Right ventricle myocardium inferior (tissue), 1 donor: ENCODE measurements at regions of chr4 and their contacts with region 1.

Region 1: DNA sequence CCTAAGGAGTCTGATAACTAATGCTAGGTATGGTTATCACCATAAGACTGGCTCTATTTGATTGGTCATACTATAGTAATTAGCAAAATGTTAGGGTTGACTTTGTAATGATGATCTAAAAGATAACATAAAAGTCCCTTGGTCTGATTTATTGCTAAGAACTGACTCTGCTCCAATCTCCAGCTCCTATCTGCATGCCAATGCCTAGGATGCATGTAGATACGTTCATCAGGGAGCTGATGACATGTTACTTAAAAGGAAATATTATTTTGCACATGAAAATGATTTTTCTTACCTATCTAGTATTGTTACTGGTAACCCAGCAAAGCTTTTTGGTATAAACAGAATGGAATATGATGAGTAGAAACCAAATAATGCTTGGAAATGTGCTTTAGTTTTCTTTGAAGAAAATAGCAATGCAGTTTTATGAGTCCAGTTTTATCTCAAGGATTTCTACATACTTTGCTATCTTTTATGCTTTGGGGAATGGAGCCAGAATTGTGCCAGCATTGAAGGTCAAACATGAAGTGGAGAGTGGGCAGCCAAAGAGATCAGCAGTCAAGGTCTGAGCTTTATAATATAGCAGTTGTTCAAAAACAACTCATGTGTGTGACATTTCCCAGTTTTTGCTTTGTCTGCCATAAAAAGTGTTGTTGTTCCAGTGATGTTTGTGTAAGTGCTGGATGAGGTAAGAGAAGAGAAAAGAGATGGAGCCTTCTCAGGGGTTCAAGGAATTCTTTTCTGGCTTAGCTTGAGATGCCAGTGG is 121.0 kb downstream of the ARHGAP24 start:
- DNase-seq: no peak
- ATAC-seq: peak; percentile 59

Region 2: DNA sequence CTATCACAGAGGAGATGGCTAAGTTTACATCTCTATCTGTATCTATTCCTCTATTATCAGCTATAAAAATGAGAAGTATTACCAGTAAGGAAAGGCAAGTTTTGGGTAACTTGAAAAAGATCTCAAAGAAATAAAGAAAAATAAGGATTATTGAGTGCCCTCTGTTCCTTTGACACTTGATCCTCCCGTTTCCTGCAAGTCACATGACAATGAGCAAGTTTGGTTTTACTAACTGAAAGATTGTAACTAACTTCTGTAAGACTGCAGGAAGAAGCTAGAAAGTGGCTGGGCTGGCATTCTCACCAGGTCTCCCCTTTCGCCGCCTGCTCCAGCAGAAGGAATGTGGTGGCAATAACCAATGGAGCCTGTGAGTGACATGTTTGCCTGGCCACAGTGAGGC is 61.9 kb before region 1 on chr4:
- intact Hi-C with region 1: no loop called
- DNase-seq: no peak
- ATAC-seq: no peak

Region 3: GRCh38 chr4:85725721-85726170 is 129.8 kb after region 1 on chr4:
- intact Hi-C with region 1: loop called (anchors 5 kb)
- DNase-seq: peak; percentile 69
- ATAC-seq: peak; percentile 94

Region 4: GRCh38 chr4:85747882-85748491 is 152.0 kb after region 1 on chr4:
- intact Hi-C with region 1: no loop called
- DNase-seq: no peak
- ATAC-seq: peak; percentile 78